H1 (cell line): ENCODE measurements at regions of chr10 and their contacts with region 1.

Region 1: GRCh38 chr10:21278491-21279239 is 246.8 kb downstream of the SKIDA1 start:
- DNase-seq: peak; percentile 94 to 100
- H3K4me3 ChIP-seq: no peak overlapping the region
- H3K27ac ChIP-seq: no peak overlapping the region
- H3K4me1 ChIP-seq: peaks cover 6 to 20% (median 17%) of the 10 kb centered on the region in 4 experiments; a peak in 6 of 7 replicates
- H3K27me3 ChIP-seq: no peaks in the 10 kb centered on the region
- CTCF ChIP-seq: peak; percentile 84 to 95 (median 90)
- EP300 ChIP-seq: no peak
- POLR2A ChIP-seq: no peak
- RAD21 ChIP-seq: peak; percentile 97 to 98

Region 2: DNA sequence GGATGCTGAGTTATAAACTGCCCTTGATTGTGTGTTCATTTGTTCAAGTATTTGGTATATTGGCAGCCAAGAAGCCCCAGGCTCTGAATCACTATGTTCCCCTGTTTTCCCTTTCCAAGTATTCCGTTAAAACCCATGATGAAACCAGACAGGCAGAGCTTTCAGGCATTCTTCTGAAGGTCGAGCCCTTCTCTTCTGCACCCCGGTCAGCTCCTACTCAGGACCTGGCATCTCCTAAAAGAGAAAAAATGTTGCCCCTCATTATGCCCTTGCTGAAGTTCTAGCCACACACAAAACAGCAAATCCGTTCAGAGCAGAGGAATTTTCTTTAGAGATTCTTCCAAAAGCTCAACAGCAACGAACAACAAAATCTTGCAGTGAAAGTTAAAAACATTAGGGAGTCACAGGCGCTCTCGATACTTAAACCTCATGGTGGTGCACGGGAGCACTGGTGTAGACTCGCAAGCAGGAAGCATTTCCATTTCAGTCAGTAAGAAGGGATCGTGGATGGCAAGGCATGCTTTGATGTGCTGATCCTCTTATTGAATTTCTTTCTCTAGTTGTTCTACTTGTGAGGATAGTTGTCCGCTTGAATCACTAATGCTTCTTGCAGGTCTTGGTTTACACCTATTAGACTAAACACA is 18.0 kb before region 1 on chr10:
- CTCF ChIA-PET with region 1: interaction called, 10 read pairs
- POLR2A ChIA-PET with region 1: no interaction called
- DNase-seq: no peak
- H3K4me3 ChIP-seq: no peak overlapping the region
- H3K27ac ChIP-seq: no peak overlapping the region
- H3K4me1 ChIP-seq: peaks cover 0 to 4% (median 1%) of the 10 kb centered on the region in 4 experiments; a peak in 3 of 7 replicates
- H3K27me3 ChIP-seq: no peaks in the 10 kb centered on the region
- CTCF ChIP-seq: no peak
- EP300 ChIP-seq: no peak
- POLR2A ChIP-seq: no peak
- RAD21 ChIP-seq: peak in 1 of 2 experiments; percentile 25; a peak in 2 of 4 replicates

Region 3: GRCh38 chr10:21292763-21293517 is 14.3 kb after region 1 on chr10:
- CTCF ChIA-PET with region 1: interaction called, 8 read pairs
- POLR2A ChIA-PET with region 1: interaction called, 25 read pairs
- DNase-seq: peak in 1 of 2 experiments; percentile 58
- H3K4me3 ChIP-seq: peak overlapping the region; percentile 36 to 67 (median 54)
- H3K27ac ChIP-seq: peak overlapping the region; percentile 82
- H3K4me1 ChIP-seq: peaks cover 3 to 28% (median 22%) of the 10 kb centered on the region in 4 experiments
- H3K27me3 ChIP-seq: no peaks in the 10 kb centered on the region
- CTCF ChIP-seq: no peak
- EP300 ChIP-seq: no peak
- POLR2A ChIP-seq: peak; percentile 61 to 78
- RAD21 ChIP-seq: peak in 1 of 2 experiments; percentile 3; a peak in 2 of 4 replicates

Region 4: DNA sequence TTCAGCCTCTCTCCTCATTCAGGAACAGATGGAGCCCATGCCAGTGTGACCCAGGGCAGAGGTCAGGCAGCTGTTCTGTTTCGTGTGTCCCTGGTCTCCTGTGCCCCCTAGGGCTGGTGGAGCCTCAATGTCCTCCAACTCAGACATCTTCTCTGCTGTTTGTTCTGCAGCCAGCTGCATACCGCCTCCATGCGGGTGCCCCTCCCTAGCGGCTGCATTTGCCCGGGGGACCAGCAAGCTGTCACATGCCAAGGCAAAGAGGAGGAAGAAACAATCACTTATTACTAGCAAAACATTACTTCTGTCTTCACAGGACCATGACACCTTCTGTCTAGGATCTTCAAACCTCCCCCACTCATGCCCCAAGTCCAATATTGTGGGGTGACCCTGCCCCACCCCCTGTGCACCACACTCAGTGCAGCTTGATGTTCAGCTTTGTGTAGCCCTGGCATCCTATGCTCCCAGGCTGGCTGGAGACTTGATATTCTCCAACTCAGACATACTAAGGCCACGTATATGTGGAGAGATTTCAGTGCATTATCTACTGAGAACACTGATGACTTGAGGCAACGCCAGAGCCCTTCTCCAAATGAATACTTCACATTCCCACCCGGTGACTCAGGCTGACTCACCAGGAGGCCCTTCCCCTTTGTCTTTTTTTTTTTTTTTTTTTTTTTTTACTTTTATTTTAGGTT is 58.0 kb after region 1 on chr10:
- CTCF ChIA-PET with region 1: interaction called, 15 read pairs
- POLR2A ChIA-PET with region 1: interaction called, 6 read pairs
- DNase-seq: peak; percentile 56 to 62
- H3K4me3 ChIP-seq: no peak overlapping the region; a peak in 1 of 8 replicates
- H3K27ac ChIP-seq: peak overlapping the region; percentile 61
- H3K4me1 ChIP-seq: peaks cover 5 to 11% (median 8%) of the 10 kb centered on the region in 4 experiments
- H3K27me3 ChIP-seq: no peaks in the 10 kb centered on the region
- CTCF ChIP-seq: peak; percentile 20 to 35 (median 29); a peak in 3 of 4 replicates
- EP300 ChIP-seq: no peak
- POLR2A ChIP-seq: no peak
- RAD21 ChIP-seq: peak; percentile 35 to 55; a peak in 3 of 4 replicates

Region 5: DNA sequence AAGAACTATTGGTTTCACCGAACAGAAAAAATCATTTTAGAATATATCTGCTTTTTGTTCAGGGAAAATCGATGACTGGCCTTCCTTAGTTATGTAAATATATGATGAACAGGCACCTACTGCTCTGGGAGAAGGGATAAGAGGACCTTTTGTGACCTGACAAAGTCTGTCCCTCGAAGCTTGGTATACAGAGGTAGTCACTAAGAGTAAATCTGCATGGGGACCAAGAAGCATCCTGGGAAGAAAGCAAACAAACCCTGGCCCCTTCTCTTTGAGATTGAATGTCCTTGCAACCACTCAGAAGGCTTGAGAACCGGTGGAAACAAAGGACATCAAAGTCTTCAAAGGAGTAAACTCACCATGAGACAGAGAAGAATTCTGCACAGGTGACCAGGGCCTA is 194.5 kb after region 1 on chr10:
- CTCF ChIA-PET with region 1: interaction called, 11 read pairs
- POLR2A ChIA-PET with region 1: no interaction called
- DNase-seq: no peak
- H3K4me3 ChIP-seq: no peak overlapping the region
- H3K27ac ChIP-seq: no peak overlapping the region
- H3K4me1 ChIP-seq: peaks cover 3 to 11% (median 5%) of the 10 kb centered on the region in 4 experiments; a peak in 5 of 7 replicates
- H3K27me3 ChIP-seq: no peaks in the 10 kb centered on the region
- CTCF ChIP-seq: no peak
- EP300 ChIP-seq: no peak; a peak in 1 of 3 replicates
- POLR2A ChIP-seq: no peak
- RAD21 ChIP-seq: no peak; a peak in 1 of 4 replicates